Activated naive CD4-positive, alpha-beta T cell treated with anti-CD3 and anti-CD28 coated beads for 36 hours (primary cell): ENCODE measurements at regions of chr18 and their contacts with region 1.

Region 1: GRCh38 chr18:10072671-10073175 is 158.9 kb downstream of the VAPA start:
- DNase-seq: no peak
- H3K4me3 Mint-ChIP-seq: no peak overlapping the region
- H3K27ac Mint-ChIP-seq: no peak overlapping the region
- H3K4me1 Mint-ChIP-seq: no peaks in the 10 kb centered on the region
- H3K27me3 Mint-ChIP-seq: no peaks in the 10 kb centered on the region

Region 2: DNA sequence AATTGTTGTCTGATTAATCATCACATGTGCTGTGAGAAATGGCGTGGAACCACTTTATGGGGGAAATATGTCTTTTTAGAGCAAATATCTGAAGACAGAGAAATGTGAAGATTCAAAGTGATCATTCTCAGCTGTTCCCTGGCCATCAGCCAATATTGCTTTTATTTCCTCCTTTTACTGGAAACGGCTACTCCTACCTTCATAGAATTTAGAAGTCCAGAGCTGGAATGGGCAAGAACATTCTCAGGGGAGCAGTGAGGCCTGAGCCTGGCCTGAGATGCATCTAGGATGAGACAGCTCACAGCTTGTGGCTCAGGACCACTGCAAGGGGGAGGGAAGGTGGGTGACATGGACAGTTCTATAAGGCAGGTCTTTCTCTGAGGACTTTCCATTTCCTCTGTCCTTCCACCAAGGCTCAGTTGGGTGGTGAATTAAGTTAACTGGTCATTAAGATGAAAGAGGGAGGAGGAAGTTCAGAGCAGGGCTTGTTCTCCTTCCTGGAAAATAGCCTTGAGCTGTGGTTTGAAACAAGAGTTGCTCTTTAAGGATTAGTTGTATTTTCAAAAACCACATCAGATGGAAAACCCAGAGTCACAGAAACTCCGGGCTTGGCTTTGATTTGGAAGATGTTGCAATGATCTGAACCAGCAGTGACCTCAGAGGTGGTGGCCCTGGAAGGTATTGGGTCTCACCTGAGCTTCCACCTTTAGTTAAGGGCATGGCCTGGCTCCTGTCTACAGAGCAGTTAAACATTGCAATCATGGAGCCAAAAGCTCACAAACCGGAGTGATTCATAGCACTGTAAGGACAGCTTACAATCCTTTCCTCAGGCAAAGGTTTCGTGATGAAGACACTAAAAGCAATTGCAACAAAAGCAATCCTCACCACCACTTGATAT is 14.6 kb before region 1 on chr18:
- CTCF ChIA-PET with region 1: no interaction called
- intact Hi-C with region 1: no loop called
- DNase-seq: peak; percentile 5
- H3K4me3 Mint-ChIP-seq: no peak overlapping the region
- H3K27ac Mint-ChIP-seq: no peak overlapping the region
- H3K4me1 Mint-ChIP-seq: no peaks in the 10 kb centered on the region
- H3K27me3 Mint-ChIP-seq: peaks cover 8% of the 10 kb centered on the region

Region 3: GRCh38 chr18:10131460-10132395 is 59.0 kb after region 1 on chr18:
- CTCF ChIA-PET with region 1: no interaction called
- intact Hi-C with region 1: loop called (anchors 10 kb)
- DNase-seq: no peak
- H3K4me3 Mint-ChIP-seq: no peak overlapping the region
- H3K27ac Mint-ChIP-seq: no peak overlapping the region
- H3K4me1 Mint-ChIP-seq: peaks cover 2% of the 10 kb centered on the region
- H3K27me3 Mint-ChIP-seq: peaks cover 23% of the 10 kb centered on the region